Naive thymus-derived CD8-positive, alpha-beta T cell (primary cell): ENCODE measurements at regions of chr14 and their contacts with region 1.

Region 1: GRCh38 chr14:49867831-49868723 is 15.5 kb upstream of the NEMF start:
- DNase-seq: peak; percentile 87 to 99 (median 95)
- ATAC-seq: peak; percentile 85 to 90
- H3K4me3 Mint-ChIP-seq: peak overlapping the region; percentile 86 to 97 (median 92)
- H3K27ac Mint-ChIP-seq: peak overlapping the region; percentile 94 to 99 (median 98)
- H3K4me1 Mint-ChIP-seq: peaks cover 6 to 39% (median 19%) of the 10 kb centered on the region in 4 donors
- H3K27me3 Mint-ChIP-seq: no peaks in the 10 kb centered on the region

Region 2: DNA sequence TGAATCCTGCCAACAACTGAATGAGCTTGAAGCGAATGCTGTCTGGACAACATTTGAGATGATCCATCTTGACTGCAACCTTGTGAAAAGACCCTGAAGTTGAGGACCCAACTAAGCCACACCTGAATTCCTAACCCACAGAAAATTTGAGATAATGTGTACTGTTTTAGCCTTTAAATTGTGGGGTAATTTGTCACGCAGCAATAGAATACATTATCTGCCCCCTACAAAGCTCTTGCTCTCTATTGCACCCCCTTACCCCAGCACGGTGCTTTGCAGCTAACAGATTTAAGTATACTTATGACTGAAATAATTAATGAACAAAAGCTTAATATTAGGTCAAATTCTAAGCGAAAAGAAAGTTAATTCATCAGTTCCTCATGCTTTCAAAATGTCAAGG is 181.7 kb before region 1 on chr14:
- POLR2A ChIA-PET with region 1: no interaction called
- DNase-seq: no peak
- ATAC-seq: no peak
- H3K4me3 Mint-ChIP-seq: peak overlapping the region in 7 of 10 donors; percentile 10 to 86 (median 56)
- H3K27ac Mint-ChIP-seq: peak overlapping the region in 2 of 10 donors; percentile 40 to 41
- H3K4me1 Mint-ChIP-seq: peaks cover 0 to 19% (median 11%) of the 10 kb centered on the region in 4 donors
- H3K27me3 Mint-ChIP-seq: no peaks in the 10 kb centered on the region

Region 3: GRCh38 chr14:49852301-49853157 is 15.5 kb before region 1 on chr14 and contains the start of gene NEMF:
- POLR2A ChIA-PET with region 1: interaction called, 117 read pairs
- DNase-seq: peak; percentile 57 to 89 (median 78)
- ATAC-seq: peak; percentile 80 to 84
- H3K4me3 Mint-ChIP-seq: peak within 1 kb of the TSS; percentile 91 to 100 (median 96)
- H3K27ac Mint-ChIP-seq: peak within 1 kb of the TSS; percentile 93 to 99 (median 96)
- H3K4me1 Mint-ChIP-seq: peaks cover 20 to 48% (median 46%) of the 10 kb centered on the region in 4 donors
- H3K27me3 Mint-ChIP-seq: no peaks in the 10 kb centered on the region
- polyA plus RNA-seq, gene NEMF: 39.6 to 46.1 (median 43.5) TPM

Region 4: GRCh38 chr14:49892636-49893308 is 24.7 kb after region 1 on chr14 and contains the start of gene ARF6:
- POLR2A ChIA-PET with region 1: interaction called, 72 read pairs
- DNase-seq: peak; percentile 88 to 98 (median 90)
- ATAC-seq: peak; percentile 78 to 82
- H3K4me3 Mint-ChIP-seq: peak within 1 kb of the TSS; percentile 92 to 100 (median 98)
- H3K27ac Mint-ChIP-seq: peak within 1 kb of the TSS; percentile 98 to 100 (median 99)
- H3K4me1 Mint-ChIP-seq: peaks cover 22 to 44% (median 36%) of the 10 kb centered on the region in 4 donors
- H3K27me3 Mint-ChIP-seq: peaks cover 0 to 1% (median 0%) of the 10 kb centered on the region in 5 donors
- polyA plus RNA-seq, gene ARF6: 74.6 to 100 (median 97.6) TPM

Region 5: DNA sequence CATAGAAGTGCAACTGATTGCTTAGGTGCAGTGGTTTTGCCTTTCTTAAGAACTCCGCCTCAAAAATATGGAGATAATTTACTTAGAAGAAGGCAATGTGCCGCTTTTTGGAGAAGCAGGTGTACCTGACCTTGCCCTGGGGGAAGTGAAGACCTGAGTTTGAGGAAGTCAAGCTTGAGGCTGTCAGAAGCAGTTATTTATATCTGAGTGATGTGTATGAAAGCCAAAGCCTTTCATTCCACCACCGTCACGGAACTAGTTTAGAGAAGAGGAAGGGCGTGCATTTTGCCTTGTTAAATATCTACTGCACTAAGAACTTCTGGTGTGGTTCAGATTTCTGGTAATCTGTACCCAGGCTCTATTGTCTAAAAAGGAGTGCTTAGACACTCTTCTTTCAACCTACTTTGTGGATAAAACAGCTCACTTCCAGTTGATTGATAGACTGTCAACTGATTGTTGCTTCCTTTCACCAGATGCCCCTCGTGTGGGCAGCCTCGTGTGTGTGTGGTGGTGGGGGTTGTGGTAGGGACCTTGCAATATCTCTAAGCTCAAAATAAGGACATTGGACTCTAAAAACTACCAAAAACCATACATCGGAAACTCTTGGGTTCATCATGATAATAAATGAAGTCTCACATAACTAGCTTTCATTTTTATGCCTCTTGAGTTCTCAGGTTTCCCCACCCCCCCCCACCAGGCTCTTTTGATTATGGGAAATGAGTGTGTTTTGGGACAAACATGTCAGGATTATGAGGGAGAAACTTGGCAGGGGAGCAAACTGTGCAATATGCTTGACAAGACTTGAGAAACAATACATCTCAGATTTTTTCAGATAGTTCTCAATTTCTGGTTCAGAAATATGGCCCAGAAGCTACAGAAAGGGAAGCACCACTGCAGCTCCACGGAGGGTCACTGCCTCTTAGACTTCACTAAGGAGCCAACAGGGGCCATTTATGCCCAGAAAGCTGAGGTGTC is 103.4 kb after region 1 on chr14:
- POLR2A ChIA-PET with region 1: interaction called, 68 read pairs
- DNase-seq: peak; percentile 19 to 91 (median 68)
- ATAC-seq: peak; percentile 86 to 91
- H3K4me3 Mint-ChIP-seq: peak overlapping the region; percentile 68 to 90 (median 83)
- H3K27ac Mint-ChIP-seq: peak overlapping the region; percentile 93 to 98 (median 96)
- H3K4me1 Mint-ChIP-seq: peaks cover 37 to 74% (median 62%) of the 10 kb centered on the region in 4 donors
- H3K27me3 Mint-ChIP-seq: no peaks in the 10 kb centered on the region

Region 6: GRCh38 chr14:50045039-50045711 is 177.1 kb after region 1 on chr14:
- POLR2A ChIA-PET with region 1: interaction called, 22 read pairs
- DNase-seq: peak in 9 of 10 donors; percentile 23 to 83 (median 62)
- ATAC-seq: peak; percentile 71 to 82
- H3K4me3 Mint-ChIP-seq: peak overlapping the region; percentile 6 to 87 (median 64)
- H3K27ac Mint-ChIP-seq: peak overlapping the region; percentile 85 to 98 (median 92)
- H3K4me1 Mint-ChIP-seq: peaks cover 49 to 76% (median 76%) of the 10 kb centered on the region in 4 donors
- H3K27me3 Mint-ChIP-seq: no peaks in the 10 kb centered on the region

Region 7: DNA sequence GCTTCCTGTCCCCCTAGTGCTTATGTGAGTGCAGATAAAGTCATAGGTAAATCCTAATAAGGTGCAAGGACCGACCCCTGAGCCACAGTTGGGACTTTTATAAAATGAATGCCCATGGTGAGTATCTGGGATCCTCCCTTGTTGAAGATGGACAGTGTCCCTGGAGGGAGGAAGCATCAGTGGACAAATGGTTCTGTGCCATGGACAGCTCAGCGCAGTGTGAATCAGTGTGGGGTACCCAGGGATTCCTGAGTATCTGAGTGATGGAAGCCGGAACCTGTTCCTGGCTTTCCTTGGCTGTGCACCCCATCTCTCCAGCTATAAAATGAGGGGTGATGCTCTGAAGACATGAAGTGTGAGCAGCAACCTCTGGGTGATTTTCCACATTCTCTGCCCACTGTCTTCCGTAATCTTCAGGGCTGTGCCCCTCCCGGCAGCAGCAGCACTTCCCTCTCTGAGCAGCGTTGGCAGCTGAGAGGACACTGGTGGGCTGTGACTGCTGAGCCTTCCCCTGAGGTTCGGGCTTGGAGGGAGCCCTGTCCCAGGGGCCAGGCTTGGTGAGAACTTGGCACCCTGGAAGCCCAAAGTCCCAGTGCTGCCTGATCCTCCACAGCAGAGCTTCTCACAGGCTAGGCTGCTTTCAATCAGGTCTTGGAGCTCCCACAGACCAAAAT is 223.3 kb after region 1 on chr14:
- POLR2A ChIA-PET with region 1: interaction called, 35 read pairs
- DNase-seq: no peak
- ATAC-seq: peak; percentile 9 to 12
- H3K4me3 Mint-ChIP-seq: peak overlapping the region in 8 of 10 donors; percentile 34 to 70 (median 54)
- H3K27ac Mint-ChIP-seq: peak overlapping the region; percentile 73 to 94 (median 91)
- H3K4me1 Mint-ChIP-seq: peaks cover 48 to 90% (median 87%) of the 10 kb centered on the region in 4 donors
- H3K27me3 Mint-ChIP-seq: no peaks in the 10 kb centered on the region

Region 8: GRCh38 chr14:50106178-50106577 is 238.1 kb after region 1 on chr14:
- POLR2A ChIA-PET with region 1: interaction called, 71 read pairs
- DNase-seq: no peak
- ATAC-seq: no peak
- H3K4me3 Mint-ChIP-seq: no peak overlapping the region
- H3K27ac Mint-ChIP-seq: peak overlapping the region in 9 of 10 donors; percentile 16 to 90 (median 59)
- H3K4me1 Mint-ChIP-seq: peaks cover 5 to 38% (median 23%) of the 10 kb centered on the region in 4 donors
- H3K27me3 Mint-ChIP-seq: no peaks in the 10 kb centered on the region